GM12878 (cell line): ENCODE measurements at regions of chr12 and their contacts with region 1.

Region 1: DNA sequence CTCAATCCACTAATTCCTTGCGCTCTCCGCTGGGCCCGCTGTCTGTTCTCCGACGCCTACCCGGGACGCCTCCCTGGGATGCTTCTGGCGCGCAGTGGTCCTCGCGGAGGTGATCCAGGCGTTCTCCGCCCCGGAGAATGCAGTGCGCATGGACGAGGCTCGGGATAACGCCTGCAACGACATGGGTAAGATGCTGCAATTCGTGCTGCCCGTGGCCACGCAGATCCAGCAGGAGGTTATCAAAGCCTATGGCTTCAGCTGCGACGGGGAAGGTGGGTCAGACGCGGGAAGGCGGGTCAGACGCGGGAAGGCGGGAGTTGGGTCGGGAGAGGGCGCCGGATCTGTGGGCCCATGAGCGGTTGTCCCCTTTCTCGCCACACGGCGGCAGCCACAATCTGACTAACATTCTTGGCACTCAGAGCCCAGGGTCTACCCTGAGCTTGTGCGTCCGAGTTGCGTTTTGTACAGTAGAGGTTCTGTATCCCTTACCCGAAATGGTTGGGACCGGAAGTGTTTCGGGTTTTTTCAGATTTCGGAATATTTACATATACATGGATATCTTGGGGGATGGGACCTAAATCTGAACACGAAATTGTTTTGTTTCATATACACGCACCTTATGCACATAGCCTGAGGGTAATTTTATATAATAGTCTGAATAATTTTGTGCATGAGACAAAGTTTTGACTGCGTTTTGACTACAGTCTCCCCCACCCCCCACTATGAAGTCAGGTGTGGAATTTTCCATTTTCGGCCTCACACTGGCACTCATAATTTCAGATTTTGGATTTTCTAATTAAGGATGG is 762 bp downstream of the C12orf57 start:
- DNase-seq: peak; percentile 85
- ATAC-seq: peak; percentile 69
- H3K4me3 ChIP-seq: peak overlapping the region; percentile 78
- H3K27ac ChIP-seq: peak overlapping the region; percentile 91
- H3K4me1 ChIP-seq: peaks cover 36% of the 10 kb centered on the region
- H3K27me3 ChIP-seq: no peaks in the 10 kb centered on the region
- CTCF ChIP-seq: peak; percentile 85 to 99 (median 95); a peak in 5 of 6 replicates
- EP300 ChIP-seq: no peak
- POLR2A ChIP-seq: peak; percentile 87
- RAD21 ChIP-seq: peak; percentile 86

Region 2: GRCh38 chr12:6867413-6868210 is 77.0 kb before region 1 on chr12 and contains the start of gene TPI1:
- CTCF ChIA-PET with region 1: interaction called, 26 read pairs
- POLR2A ChIA-PET with region 1: interaction called, 22 read pairs
- RAD21 ChIA-PET with region 1: interaction called, 20 read pairs
- SMC1A ChIA-PET with region 1: interaction called, 5 read pairs
- in situ Hi-C with region 1: no loop called
- intact Hi-C with region 1: no loop called
- DNase-seq: peak; percentile 23
- ATAC-seq: peak; percentile 86
- H3K4me3 ChIP-seq: peak within 1 kb of the TSS; percentile 100
- H3K27ac ChIP-seq: peak within 1 kb of the TSS; percentile 96
- H3K4me1 ChIP-seq: peaks cover 32% of the 10 kb centered on the region
- H3K27me3 ChIP-seq: no peaks in the 10 kb centered on the region
- CTCF ChIP-seq: no peak
- EP300 ChIP-seq: no peak
- POLR2A ChIP-seq: peak; percentile 88
- RAD21 ChIP-seq: no peak
- polyA plus RNA-seq, gene TPI1: 5,044 to 7,349 TPM

Region 3: DNA sequence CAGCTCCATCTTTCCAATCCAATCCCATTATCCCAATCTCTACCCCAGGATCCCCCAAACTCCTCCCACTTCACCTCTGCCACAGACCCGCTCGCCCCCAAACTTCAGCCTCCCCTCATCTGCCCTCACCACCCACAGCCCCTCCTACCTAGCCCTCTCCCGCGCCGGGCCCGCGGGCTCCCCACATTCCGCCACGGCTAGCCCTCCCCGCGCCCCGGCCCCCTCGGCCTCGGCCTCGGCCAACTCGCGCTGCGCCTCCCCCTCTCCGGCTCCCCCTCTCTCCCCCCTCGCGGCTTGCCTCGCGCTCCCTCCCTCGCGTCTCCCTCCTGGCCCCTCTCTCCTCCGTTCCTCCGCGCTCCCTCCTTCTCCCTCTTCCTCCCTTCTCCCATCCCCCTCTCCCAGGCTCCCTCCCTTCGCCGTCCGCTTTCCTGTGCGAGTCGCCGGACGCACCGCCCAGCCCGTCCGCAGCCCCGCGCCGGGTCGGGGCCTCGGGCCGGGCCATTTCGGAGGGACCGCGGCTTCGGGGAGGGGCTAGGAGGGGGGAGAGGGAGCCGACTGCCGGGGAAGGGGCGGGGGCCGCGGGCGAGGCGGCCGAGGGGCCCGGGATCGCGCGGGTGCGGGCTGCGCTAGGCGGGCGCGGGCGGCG is 17.1 kb before region 1 on chr12 and contains the start of gene ATN1:
- CTCF ChIA-PET with region 1: interaction called, 111 read pairs
- POLR2A ChIA-PET with region 1: interaction called, 19 read pairs
- RAD21 ChIA-PET with region 1: interaction called, 45 read pairs
- SMC1A ChIA-PET with region 1: interaction called, 29 read pairs
- in situ Hi-C with region 1: no loop called
- intact Hi-C with region 1: loop called (anchors 2 kb)
- DNase-seq: no peak
- ATAC-seq: peak; percentile 43
- H3K4me3 ChIP-seq: peak within 1 kb of the TSS; percentile 95
- H3K27ac ChIP-seq: peak within 1 kb of the TSS; percentile 86
- H3K4me1 ChIP-seq: peaks cover 37% of the 10 kb centered on the region
- H3K27me3 ChIP-seq: no peaks in the 10 kb centered on the region
- CTCF ChIP-seq: no peak
- EP300 ChIP-seq: no peak
- POLR2A ChIP-seq: peak; percentile 79
- RAD21 ChIP-seq: no peak
- polyA plus RNA-seq, gene ATN1: 0.08 to 0.15 TPM

Region 4: GRCh38 chr12:6965026-6965661 is 20.6 kb after region 1 on chr12:
- CTCF ChIA-PET with region 1: interaction called, 645 read pairs
- POLR2A ChIA-PET with region 1: interaction called, 524 read pairs
- RAD21 ChIA-PET with region 1: interaction called, 426 read pairs
- SMC1A ChIA-PET with region 1: interaction called, 395 read pairs
- in situ Hi-C with region 1: no loop called
- intact Hi-C with region 1: loop called (anchors 1 kb)
- DNase-seq: no peak
- ATAC-seq: peak; percentile 66
- H3K4me3 ChIP-seq: no peak overlapping the region
- H3K27ac ChIP-seq: peak overlapping the region; percentile 64
- H3K4me1 ChIP-seq: peaks cover 38% of the 10 kb centered on the region
- H3K27me3 ChIP-seq: no peaks in the 10 kb centered on the region
- CTCF ChIP-seq: peak; percentile 86 to 99 (median 96)
- EP300 ChIP-seq: 0 out of 4 replicates have a peak, but pooled peaks of 1 of the 2 experiments have one; percentile 11
- POLR2A ChIP-seq: peak; percentile 44; the same call in 1 of the 2 replicates
- RAD21 ChIP-seq: peak; percentile 88

Region 5: GRCh38 chr12:7042842-7043241 is 98.3 kb after region 1 on chr12:
- CTCF ChIA-PET with region 1: interaction called, 17 read pairs
- POLR2A ChIA-PET with region 1: interaction called, 3 read pairs
- RAD21 ChIA-PET with region 1: no interaction called
- SMC1A ChIA-PET with region 1: interaction called, 4 read pairs
- in situ Hi-C with region 1: no loop called
- intact Hi-C with region 1: no loop called
- DNase-seq: no peak
- ATAC-seq: peak; percentile 41; the same call in 1 of the 3 replicates
- H3K4me3 ChIP-seq: no peak overlapping the region
- H3K27ac ChIP-seq: no peak overlapping the region
- H3K4me1 ChIP-seq: no peaks in the 10 kb centered on the region; the same call in 1 of the 2 replicates
- H3K27me3 ChIP-seq: no peaks in the 10 kb centered on the region
- CTCF ChIP-seq: 0 out of 6 replicates have a peak, but pooled peaks of 1 of the 3 experiments have one; percentile 18
- EP300 ChIP-seq: no peak
- POLR2A ChIP-seq: no peak
- RAD21 ChIP-seq: 0 out of 2 replicates have a peak, but pooled peaks have one; percentile 29

Region 6: GRCh38 chr12:7162691-7163114 is 218.1 kb after region 1 on chr12:
- CTCF ChIA-PET with region 1: no interaction called
- POLR2A ChIA-PET with region 1: no interaction called
- RAD21 ChIA-PET with region 1: no interaction called
- SMC1A ChIA-PET with region 1: no interaction called
- in situ Hi-C with region 1: no loop called
- intact Hi-C with region 1: no loop called
- DNase-seq: no peak
- ATAC-seq: peak; percentile 66
- H3K4me3 ChIP-seq: no peak overlapping the region
- H3K27ac ChIP-seq: no peak overlapping the region
- H3K4me1 ChIP-seq: no peaks in the 10 kb centered on the region
- H3K27me3 ChIP-seq: peaks cover 0 to 4% of the 10 kb centered on the region in 2 experiments; a peak in 1 of 4 replicates
- CTCF ChIP-seq: peak; percentile 38 to 43 (median 39); a peak in 5 of 6 replicates
- EP300 ChIP-seq: no peak
- POLR2A ChIP-seq: no peak
- RAD21 ChIP-seq: no peak